GM12878 (cell line): ENCODE measurements at regions of chr3 and their contacts with region 1.

Region 1: GRCh38 chr3:27880969-27881892 is 159.1 kb upstream of the EOMES start:
- DNase-seq: peak; percentile 11
- ATAC-seq: peak; percentile 75
- H3K4me3 ChIP-seq: peak overlapping the region; percentile 41
- H3K27ac ChIP-seq: no peak overlapping the region
- H3K4me1 ChIP-seq: no peaks in the 10 kb centered on the region; the same call in 1 of the 2 replicates
- H3K27me3 ChIP-seq: no peaks in the 10 kb centered on the region
- CTCF ChIP-seq: no peak
- EP300 ChIP-seq: no peak
- POLR2A ChIP-seq: no peak
- RAD21 ChIP-seq: no peak

Region 2: DNA sequence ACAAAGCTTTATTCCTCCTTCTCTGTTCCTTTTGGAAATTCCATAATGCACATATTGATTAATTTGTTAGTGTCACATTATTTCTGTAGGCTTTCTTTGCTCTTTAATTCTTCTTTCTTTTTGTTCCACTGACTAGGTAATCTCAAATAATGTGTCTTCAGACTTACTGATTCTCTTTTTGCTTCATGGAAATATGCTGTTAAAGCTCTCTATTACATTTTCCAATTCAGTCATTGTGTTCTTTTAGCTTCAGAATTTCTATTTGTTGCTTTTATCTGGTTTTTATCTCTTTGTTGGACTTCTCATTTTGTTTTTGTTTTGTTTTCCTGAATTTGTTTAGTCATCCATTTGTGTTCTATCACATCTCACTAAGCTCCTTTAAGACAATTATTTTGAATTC is 12.1 kb before region 1 on chr3:
- CTCF ChIA-PET with region 1: interaction called, 3 read pairs
- POLR2A ChIA-PET with region 1: interaction called, 3 read pairs
- RAD21 ChIA-PET with region 1: interaction called, 3 read pairs
- SMC1A ChIA-PET with region 1: interaction called, 13 read pairs
- in situ Hi-C with region 1: no loop called
- intact Hi-C with region 1: no loop called
- DNase-seq: no peak
- ATAC-seq: no peak
- H3K4me3 ChIP-seq: no peak overlapping the region
- H3K27ac ChIP-seq: no peak overlapping the region
- H3K4me1 ChIP-seq: no peaks in the 10 kb centered on the region
- H3K27me3 ChIP-seq: no peaks in the 10 kb centered on the region
- CTCF ChIP-seq: no peak
- EP300 ChIP-seq: no peak
- POLR2A ChIP-seq: no peak
- RAD21 ChIP-seq: no peak

Region 3: GRCh38 chr3:27914199-27914598 is 33.0 kb after region 1 on chr3:
- CTCF ChIA-PET with region 1: no interaction called
- POLR2A ChIA-PET with region 1: no interaction called
- RAD21 ChIA-PET with region 1: no interaction called
- SMC1A ChIA-PET with region 1: interaction called, 11 read pairs
- in situ Hi-C with region 1: no loop called
- intact Hi-C with region 1: no loop called
- DNase-seq: no peak
- ATAC-seq: peak; percentile 35
- H3K4me3 ChIP-seq: no peak overlapping the region
- H3K27ac ChIP-seq: no peak overlapping the region
- H3K4me1 ChIP-seq: no peaks in the 10 kb centered on the region
- H3K27me3 ChIP-seq: no peaks in the 10 kb centered on the region
- CTCF ChIP-seq: peak in 1 of 3 experiments; percentile 24; a peak in 2 of 6 replicates
- EP300 ChIP-seq: no peak
- POLR2A ChIP-seq: no peak
- RAD21 ChIP-seq: peak; percentile 32; the same call in 1 of the 2 replicates

Region 4: GRCh38 chr3:27993051-27993450 is 111.8 kb after region 1 on chr3:
- CTCF ChIA-PET with region 1: no interaction called
- POLR2A ChIA-PET with region 1: no interaction called
- RAD21 ChIA-PET with region 1: no interaction called
- SMC1A ChIA-PET with region 1: no interaction called
- in situ Hi-C with region 1: no loop called
- intact Hi-C with region 1: no loop called
- DNase-seq: no peak
- ATAC-seq: no peak
- H3K4me3 ChIP-seq: no peak overlapping the region
- H3K27ac ChIP-seq: no peak overlapping the region
- H3K4me1 ChIP-seq: no peaks in the 10 kb centered on the region
- H3K27me3 ChIP-seq: no peaks in the 10 kb centered on the region
- CTCF ChIP-seq: no peak
- EP300 ChIP-seq: no peak
- POLR2A ChIP-seq: no peak
- RAD21 ChIP-seq: no peak